Sigmoid colon (tissue), 7 donors: ENCODE measurements at regions of chr2 and their contacts with region 1.

Region 1: GRCh38 chr2:238847841-238848690 is at the start of gene TWIST2:
- DNase-seq: peak; percentile 96
- H3K4me3 ChIP-seq: peak within 1 kb of the TSS; percentile 69 to 88 (median 87)
- H3K27ac ChIP-seq: peak within 1 kb of the TSS; percentile 90 to 97 (median 94)
- H3K4me1 ChIP-seq: peaks cover 0 to 42% (median 25%) of the 10 kb centered on the region in 4 donors
- H3K27me3 ChIP-seq: peaks cover 0 to 4% (median 3%) of the 10 kb centered on the region in 3 donors
- CTCF ChIP-seq: no peak
- EP300 ChIP-seq: no peak
- POLR2A ChIP-seq: no peak
- total RNA-seq, gene TWIST2: 53.9 to 92.2 (median 79.3) TPM

Region 2: GRCh38 chr2:238720232-238720672 is 127.8 kb before region 1 on chr2:
- intact Hi-C with region 1: loop called (anchors 10 kb)
- DNase-seq: no peak
- H3K4me3 ChIP-seq: no peak overlapping the region
- H3K27ac ChIP-seq: no peak overlapping the region
- H3K4me1 ChIP-seq: peaks cover 0 to 14% (median 11%) of the 10 kb centered on the region in 4 donors
- H3K27me3 ChIP-seq: no peaks in the 10 kb centered on the region
- CTCF ChIP-seq: peak in 3 of 4 experiments; percentile 27 to 59 (median 31)
- EP300 ChIP-seq: no peak
- POLR2A ChIP-seq: no peak

Region 3: GRCh38 chr2:238895891-238896600 is 48.0 kb after region 1 on chr2:
- intact Hi-C with region 1: loop called (anchors 2 kb)
- DNase-seq: peak; percentile 94
- H3K4me3 ChIP-seq: no peak overlapping the region
- H3K27ac ChIP-seq: peak overlapping the region; percentile 38 to 83 (median 78)
- H3K4me1 ChIP-seq: peaks cover 0 to 89% (median 81%) of the 10 kb centered on the region in 4 donors
- H3K27me3 ChIP-seq: no peaks in the 10 kb centered on the region
- CTCF ChIP-seq: no peak
- EP300 ChIP-seq: no peak
- POLR2A ChIP-seq: no peak